ENCODE measurements at regions of chr7 and their contacts with region 1.

Region 1: DNA sequence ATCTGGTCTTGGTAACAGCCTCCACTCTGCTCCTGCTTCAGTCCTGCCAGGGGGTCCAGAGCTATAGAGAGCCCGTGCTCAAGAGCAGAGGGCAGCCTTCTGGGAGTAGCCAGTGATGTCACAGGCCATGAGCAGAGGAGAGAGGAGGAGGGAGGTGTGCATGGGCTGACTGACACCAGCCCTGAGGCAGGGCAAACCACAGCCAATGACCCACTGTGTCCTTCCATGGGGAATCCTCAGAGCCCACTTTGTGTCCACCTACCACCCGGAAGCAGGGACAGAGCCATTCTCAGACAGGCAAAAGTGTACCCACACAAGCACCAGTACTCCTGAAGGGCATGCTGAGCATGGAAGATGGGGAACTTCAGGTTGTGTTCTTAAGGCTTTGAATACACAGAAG is at the start of gene PAX4:
- DNase-seq: no peak
- ATAC-seq: no peak
- H3K4me3 ChIP-seq: no peak within 1 kb of the TSS
- H3K27ac ChIP-seq: no peak within 1 kb of the TSS
- H3K4me1 ChIP-seq: no peaks in the 10 kb centered on the region; the same call in 1 of the 2 replicates
- H3K27me3 ChIP-seq: peaks cover 46% of the 10 kb centered on the region
- CTCF ChIP-seq: no peak
- total RNA-seq, gene PAX4: not detected

Region 2: DNA sequence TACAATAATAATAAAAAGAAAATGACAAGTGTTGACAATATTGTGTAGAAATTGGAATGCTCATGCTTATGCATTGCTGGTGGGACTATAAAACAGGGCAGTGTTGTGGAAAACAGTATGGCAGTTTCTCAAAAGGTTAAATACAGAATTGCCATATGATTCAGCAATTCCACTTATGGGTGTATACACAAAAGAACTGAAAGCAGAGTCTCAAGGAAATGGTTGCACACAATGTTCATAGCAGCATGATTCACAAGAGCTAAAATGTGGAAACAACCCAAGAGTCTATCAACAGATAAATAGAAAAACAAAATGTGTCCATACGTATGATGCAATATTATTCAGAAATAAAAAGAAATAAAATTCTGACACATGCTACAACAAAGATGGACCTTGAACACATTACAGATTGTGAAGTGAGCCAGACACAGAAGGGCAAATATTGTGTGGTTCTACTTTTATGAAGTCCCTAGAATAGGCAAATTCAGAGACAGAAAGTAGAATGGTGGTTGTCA is 300.5 kb before region 1 on chr7:
- CTCF ChIA-PET with region 1: no interaction called
- POLR2A ChIA-PET with region 1: no interaction called
- in situ Hi-C with region 1: no loop called
- intact Hi-C with region 1: no loop called
- DNase-seq: no peak
- ATAC-seq: no peak
- H3K4me3 ChIP-seq: no peak overlapping the region
- H3K27ac ChIP-seq: no peak overlapping the region
- H3K4me1 ChIP-seq: no peaks in the 10 kb centered on the region
- H3K27me3 ChIP-seq: peaks cover 10% of the 10 kb centered on the region
- CTCF ChIP-seq: no peak

Region 3: DNA sequence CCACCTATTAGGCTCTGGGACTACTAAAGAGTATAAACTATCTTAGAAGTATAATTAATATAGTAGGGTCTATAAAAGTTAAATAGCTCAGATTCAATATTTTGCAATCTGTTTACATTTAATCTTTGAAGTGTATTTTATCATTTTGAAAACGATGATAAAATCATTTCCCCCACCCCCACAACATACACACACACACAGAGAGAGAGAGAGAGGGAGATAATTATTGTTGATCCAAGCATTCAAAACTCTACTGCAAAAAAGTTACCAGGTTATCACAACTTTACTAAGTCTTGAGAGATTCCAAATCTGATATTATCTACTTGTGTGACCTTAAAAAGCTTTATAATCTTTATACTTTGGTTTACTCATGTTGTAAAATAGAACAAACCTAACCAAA is 239.5 kb before region 1 on chr7:
- CTCF ChIA-PET with region 1: no interaction called
- POLR2A ChIA-PET with region 1: no interaction called
- in situ Hi-C with region 1: no loop called
- intact Hi-C with region 1: no loop called
- DNase-seq: no peak
- ATAC-seq: no peak
- H3K4me3 ChIP-seq: no peak overlapping the region
- H3K27ac ChIP-seq: no peak overlapping the region
- H3K4me1 ChIP-seq: no peaks in the 10 kb centered on the region
- H3K27me3 ChIP-seq: no peaks in the 10 kb centered on the region
- CTCF ChIP-seq: no peak

Region 4: GRCh38 chr7:127598318-127598717 is 19.7 kb before region 1 on chr7:
- CTCF ChIA-PET with region 1: no interaction called
- POLR2A ChIA-PET with region 1: interaction called, 10 read pairs
- in situ Hi-C with region 1: no loop called
- intact Hi-C with region 1: no loop called
- DNase-seq: no peak
- ATAC-seq: peak; percentile 61; the same call in 1 of the 2 replicates
- H3K4me3 ChIP-seq: no peak overlapping the region
- H3K27ac ChIP-seq: no peak overlapping the region
- H3K4me1 ChIP-seq: no peaks in the 10 kb centered on the region
- H3K27me3 ChIP-seq: peaks cover 10% of the 10 kb centered on the region; the same call in 1 of the 2 replicates
- CTCF ChIP-seq: peak; percentile 68

Region 5: DNA sequence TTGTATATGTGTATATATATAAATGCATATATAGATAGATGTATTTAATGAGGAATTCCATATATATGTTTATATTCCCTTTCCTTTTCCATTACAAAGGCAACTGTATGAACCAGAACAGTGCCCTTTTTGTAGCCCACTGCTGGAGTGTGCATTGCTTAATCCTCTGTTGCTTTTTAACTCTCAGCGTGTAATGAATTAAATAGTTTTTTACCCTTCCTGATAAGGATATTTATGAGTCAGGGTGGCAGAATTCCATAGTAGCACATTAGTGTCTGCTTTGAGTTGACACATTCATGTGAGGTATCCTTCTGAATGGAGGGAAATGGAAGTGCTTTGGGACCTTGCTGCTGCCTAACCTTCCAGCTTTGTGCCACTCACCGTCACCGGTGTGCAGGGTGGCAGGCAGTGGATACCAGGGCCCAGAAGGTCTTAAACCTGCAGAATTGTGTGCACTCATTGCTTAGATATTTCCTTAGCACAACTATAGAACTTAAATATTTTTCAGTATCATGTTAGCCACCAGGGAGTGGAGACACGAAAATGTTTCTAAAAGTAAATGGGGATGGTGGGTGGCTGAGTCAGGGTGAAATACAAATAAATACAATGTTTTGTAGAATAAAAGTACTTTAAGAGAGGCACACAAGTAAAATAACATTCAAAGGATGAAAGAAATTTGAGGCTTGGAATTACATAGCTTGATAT is 151.8 kb after region 1 on chr7:
- CTCF ChIA-PET with region 1: no interaction called
- POLR2A ChIA-PET with region 1: no interaction called
- in situ Hi-C with region 1: no loop called
- intact Hi-C with region 1: no loop called
- DNase-seq: no peak
- ATAC-seq: no peak
- H3K4me3 ChIP-seq: no peak overlapping the region
- H3K27ac ChIP-seq: no peak overlapping the region
- H3K4me1 ChIP-seq: no peaks in the 10 kb centered on the region; the same call in 1 of the 2 replicates
- H3K27me3 ChIP-seq: no peaks in the 10 kb centered on the region
- CTCF ChIP-seq: no peak

Measured in Panc1 (cell line).